Posterior cingulate gyrus (tissue), 11 donors: ENCODE measurements at regions of chr14 and their contacts with region 1.

Region 1: DNA sequence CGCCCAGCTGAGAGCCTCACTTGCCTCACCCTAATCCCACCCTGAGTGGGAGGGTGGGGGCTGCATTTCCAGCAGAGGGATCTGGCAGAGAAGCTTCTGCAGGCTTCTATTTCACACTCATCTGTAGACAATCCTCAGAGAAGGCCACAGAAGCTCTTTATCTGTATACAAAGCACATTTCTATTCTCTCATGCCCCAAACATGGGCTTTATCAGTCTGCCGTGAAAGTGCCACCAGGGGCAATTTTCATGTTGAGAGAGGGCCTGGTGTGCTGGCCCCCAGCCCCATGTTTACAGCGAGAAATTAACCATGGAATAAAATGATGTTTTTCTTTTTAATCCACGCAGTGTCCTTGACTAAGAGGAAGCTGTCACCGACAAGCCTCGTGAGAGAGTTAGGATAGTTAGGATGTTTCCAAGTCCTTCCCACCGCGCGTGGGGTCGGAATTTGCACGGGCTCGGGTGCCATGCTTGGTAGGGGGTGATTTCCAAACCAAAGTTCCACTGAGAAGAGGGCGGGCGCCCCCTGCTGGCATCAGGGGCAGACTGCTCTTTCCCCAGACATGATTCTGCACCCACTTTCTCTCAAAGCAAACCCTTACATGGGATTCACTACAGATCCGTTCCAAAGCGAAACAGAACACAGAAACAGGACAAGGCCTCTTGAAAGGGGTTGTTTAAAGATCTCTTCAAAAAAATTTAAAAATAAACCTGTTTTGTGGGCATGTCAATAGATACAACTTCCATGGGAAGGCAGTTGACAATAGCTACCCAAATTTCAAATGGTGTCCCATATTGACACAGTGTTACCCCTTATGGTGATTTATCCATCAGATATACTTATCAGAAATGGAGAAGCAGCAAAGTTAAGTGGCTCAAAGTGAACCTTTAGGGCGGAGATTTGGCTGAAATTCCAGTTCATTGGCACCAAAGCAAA is 19.4 kb downstream of the BDKRB1 start:
- DNase-seq: peak; percentile 69 to 97 (median 87)

Region 2: GRCh38 chr14:96100161-96101029 is 175.1 kb before region 1 on chr14:
- intact Hi-C with region 1: loop called (anchors 1 kb)
- DNase-seq: peak; percentile 65 to 96 (median 83)

Region 3: DNA sequence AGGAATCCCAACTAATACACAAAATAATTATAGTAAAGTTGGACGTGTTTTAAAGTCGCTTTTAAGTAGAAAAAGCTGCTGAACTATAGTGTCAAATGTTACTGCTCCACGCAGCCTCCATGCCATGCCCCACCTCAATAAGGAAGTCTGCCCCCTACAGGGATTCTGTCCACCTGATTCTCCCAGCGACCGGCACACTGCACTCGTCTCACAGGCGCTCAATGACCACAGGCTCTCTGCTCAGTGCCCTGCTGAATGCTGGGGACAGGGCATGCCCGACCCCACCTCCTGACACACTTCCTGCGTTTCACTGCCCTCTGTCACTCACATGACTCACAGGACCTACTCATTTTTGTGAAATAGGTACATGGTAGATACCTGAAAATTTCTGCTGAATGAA is 29.5 kb after region 1 on chr14:
- intact Hi-C with region 1: no loop called
- DNase-seq: peak in 1 of 10 donors; percentile 71